ENCODE measurements at regions of chr22 and their contacts with region 1.

Region 1: GRCh38 chr22:36856121-36856791 is 4.5 kb upstream of the NCF4 start:
- DNase-seq: peak; percentile 77 to 92
- H3K4me3 ChIP-seq: no peak overlapping the region
- H3K27ac ChIP-seq: peak overlapping the region in 1 of 2 donors; percentile 27
- H3K4me1 ChIP-seq: no peaks in the 10 kb centered on the region
- H3K27me3 ChIP-seq: no peaks in the 10 kb centered on the region
- CTCF ChIP-seq: peak; percentile 96 to 100 (median 100)
- POLR2A ChIP-seq: no peak

Region 2: DNA sequence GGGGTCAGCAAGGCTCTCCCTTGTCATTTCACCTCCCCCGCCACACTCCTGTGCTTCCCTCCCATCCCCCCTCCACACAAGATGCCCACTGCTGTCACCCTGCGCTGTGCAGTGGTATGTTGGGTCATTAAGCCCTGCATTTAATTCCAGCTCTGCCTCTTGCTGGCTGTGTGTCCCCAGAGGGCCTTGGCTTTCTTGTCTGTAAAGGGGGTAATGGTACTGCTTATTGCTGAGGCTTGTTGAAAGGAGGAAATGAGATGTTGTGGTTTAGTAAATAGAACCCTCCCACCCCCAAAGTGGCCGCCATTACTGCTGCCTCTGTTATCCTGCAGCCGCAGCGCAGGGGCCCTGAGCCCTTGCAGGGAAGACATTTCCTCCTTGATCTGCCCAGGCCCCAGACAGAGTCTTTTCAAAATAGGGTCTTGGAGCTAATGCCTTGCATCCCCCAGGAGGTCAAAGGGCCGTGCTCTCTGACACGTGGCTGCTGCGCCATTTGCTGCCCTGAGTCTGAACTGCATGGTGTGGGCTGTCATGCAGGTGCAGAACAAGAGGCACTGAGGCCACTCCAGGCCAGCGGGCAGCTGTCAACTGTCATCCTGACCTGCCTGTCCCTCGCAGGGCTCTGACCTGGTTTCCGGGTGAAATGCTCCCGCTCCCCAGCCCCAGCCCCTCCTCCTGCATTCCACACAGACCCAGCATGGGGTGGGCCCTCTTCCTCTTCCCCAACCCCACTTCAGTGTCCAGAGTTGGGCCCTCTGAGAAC is 58.2 kb before region 1 on chr22:
- intact Hi-C with region 1: no loop called
- DNase-seq: no peak
- H3K4me3 ChIP-seq: no peak overlapping the region
- H3K27ac ChIP-seq: no peak overlapping the region
- H3K4me1 ChIP-seq: no peaks in the 10 kb centered on the region
- H3K27me3 ChIP-seq: no peaks in the 10 kb centered on the region
- CTCF ChIP-seq: no peak
- POLR2A ChIP-seq: no peak

Region 3: DNA sequence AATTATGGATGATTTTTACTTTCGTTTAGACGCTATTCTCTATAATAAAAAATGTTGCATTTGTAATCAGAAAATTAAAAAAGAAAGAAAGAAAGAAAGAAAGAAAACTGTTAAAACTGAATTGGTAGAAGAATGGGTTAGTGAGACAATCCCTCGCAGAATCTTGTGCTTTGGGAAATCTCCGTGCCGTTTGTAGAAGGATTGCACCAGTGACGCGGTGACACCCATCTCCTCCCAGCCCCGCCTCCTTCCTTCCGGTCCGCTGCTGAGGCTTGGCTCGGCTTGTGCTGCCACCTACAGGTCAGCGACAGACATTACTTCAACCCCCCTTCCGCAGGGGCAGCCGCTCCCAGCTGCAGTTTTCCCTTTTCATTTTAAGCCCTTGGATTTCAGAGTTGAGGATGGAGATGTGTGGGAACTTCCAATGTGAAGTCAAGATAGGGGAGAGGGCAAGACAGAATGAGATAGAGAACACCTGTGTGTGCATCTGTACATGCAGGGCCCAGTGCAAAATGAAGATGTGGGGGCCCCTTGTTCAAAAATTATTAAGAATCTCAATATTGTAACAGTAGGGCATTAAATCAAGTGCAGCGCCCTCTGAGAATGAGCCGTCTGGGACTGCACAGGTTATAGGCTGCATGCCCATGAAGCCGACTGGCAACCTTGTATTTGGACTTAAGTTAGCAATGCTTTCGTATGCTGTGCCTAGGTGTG is 121.8 kb after region 1 on chr22:
- intact Hi-C with region 1: loop called (anchors 5 kb)
- DNase-seq: peak; percentile 87 to 88
- H3K4me3 ChIP-seq: peak overlapping the region; percentile 24 to 57 (median 44)
- H3K27ac ChIP-seq: no peak overlapping the region
- H3K4me1 ChIP-seq: no peaks in the 10 kb centered on the region
- H3K27me3 ChIP-seq: no peaks in the 10 kb centered on the region
- CTCF ChIP-seq: peak; percentile 88 to 97 (median 95)
- POLR2A ChIP-seq: no peak

Measured in breast epithelium (tissue), 4 donors.